ENCODE measurements at regions of chr2 and their contacts with region 1.

Region 1: GRCh38 chr2:119366649-119367471 is at the starts of genes C2orf76 and DBI:
- DNase-seq: peak; percentile 96 to 98
- ATAC-seq: peak; percentile 99
- H3K4me3 ChIP-seq: peak within 1 kb of the TSS; percentile 82 to 86
- H3K27ac ChIP-seq: peak within 1 kb of the TSS in 1 of 2 donors; percentile 41
- H3K4me1 ChIP-seq: peaks cover 0 to 8% of the 10 kb centered on the region in 2 donors
- H3K27me3 ChIP-seq: no peaks in the 10 kb centered on the region
- total RNA-seq, gene C2orf76: 11.2 to 14.0 TPM
- total RNA-seq, gene DBI: 60.1 to 63.2 TPM

Region 2: DNA sequence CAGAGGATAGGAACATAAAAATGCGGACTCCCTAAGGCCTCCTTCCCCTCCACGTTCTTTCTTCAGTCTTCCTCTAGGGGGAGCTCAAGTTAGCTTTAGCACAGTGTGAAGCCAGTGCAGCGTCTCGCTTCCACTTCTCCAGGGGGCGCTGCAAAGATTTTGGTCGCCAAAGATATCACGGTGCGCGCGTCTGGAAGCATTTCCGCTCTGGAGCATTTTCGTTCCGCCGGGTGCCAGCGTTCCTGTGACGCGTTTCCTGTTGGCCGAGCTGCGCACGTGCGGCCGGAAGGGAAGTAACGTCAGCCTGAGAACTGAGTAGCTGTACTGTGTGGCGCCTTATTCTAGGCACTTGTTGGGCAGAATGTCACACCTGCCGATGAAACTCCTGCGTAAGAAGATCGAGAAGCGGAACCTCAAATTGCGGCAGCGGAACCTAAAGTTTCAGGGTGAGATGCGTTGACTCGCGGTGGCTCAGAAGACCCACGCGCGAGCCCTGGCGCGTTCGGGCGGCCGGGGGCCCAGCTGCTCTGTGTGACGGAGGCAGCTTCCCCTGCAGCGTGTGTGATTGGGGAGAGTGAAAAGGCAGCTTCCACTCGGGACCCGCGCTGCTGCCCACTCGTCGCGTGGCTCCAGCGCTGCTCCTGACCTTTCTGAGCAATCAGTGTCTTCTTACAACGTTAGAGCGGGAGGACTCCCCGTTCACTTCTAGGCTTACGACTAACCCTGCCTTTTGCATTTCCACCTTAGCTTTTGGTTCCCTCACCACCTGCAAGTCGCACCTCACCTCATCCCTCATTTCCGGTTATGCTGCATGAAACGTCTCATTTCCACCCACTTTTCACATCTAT is 1552.2 kb before region 1 on chr2 and contains the start of gene DDX18:
- intact Hi-C with region 1: loop called in 1 of 2 experiments (anchors 10 kb)
- DNase-seq: peak; percentile 98 to 99
- ATAC-seq: peak; percentile 100
- H3K4me3 ChIP-seq: peak within 1 kb of the TSS; percentile 67 to 93
- H3K27ac ChIP-seq: peak within 1 kb of the TSS; percentile 17 to 94
- H3K4me1 ChIP-seq: no peaks in the 10 kb centered on the region
- H3K27me3 ChIP-seq: no peaks in the 10 kb centered on the region
- total RNA-seq, gene DDX18: 42.2 to 54.3 TPM

Region 3: GRCh38 chr2:119223521-119224390 is 143.1 kb before region 1 on chr2 and contains the start of gene STEAP3:
- intact Hi-C with region 1: loop called in 1 of 2 experiments (anchors 10 kb)
- DNase-seq: peak; percentile 90 to 92
- ATAC-seq: peak; percentile 87
- H3K4me3 ChIP-seq: peak within 1 kb of the TSS; percentile 30 to 61
- H3K27ac ChIP-seq: no peak within 1 kb of the TSS
- H3K4me1 ChIP-seq: no peaks in the 10 kb centered on the region
- H3K27me3 ChIP-seq: no peaks in the 10 kb centered on the region
- total RNA-seq, gene STEAP3: 8.0 to 20.3 TPM

Region 4: GRCh38 chr2:119240311-119241202 is 126.3 kb before region 1 on chr2:
- intact Hi-C with region 1: loop called in 1 of 2 experiments (anchors 5 kb)
- DNase-seq: peak in 1 of 2 donors; percentile 78
- ATAC-seq: peak; percentile 52
- H3K4me3 ChIP-seq: no peak overlapping the region
- H3K27ac ChIP-seq: peak overlapping the region in 1 of 2 donors; percentile 87
- H3K4me1 ChIP-seq: peaks cover 0 to 1% of the 10 kb centered on the region in 2 donors
- H3K27me3 ChIP-seq: no peaks in the 10 kb centered on the region